ENCODE measurements at regions of chr11 and their contacts with region 1.

Region 1: GRCh38 chr11:45102810-45103621 is 43.4 kb upstream of the PRDM11 start:
- DNase-seq: no peak
- ATAC-seq: peak; percentile 73

Region 2: DNA sequence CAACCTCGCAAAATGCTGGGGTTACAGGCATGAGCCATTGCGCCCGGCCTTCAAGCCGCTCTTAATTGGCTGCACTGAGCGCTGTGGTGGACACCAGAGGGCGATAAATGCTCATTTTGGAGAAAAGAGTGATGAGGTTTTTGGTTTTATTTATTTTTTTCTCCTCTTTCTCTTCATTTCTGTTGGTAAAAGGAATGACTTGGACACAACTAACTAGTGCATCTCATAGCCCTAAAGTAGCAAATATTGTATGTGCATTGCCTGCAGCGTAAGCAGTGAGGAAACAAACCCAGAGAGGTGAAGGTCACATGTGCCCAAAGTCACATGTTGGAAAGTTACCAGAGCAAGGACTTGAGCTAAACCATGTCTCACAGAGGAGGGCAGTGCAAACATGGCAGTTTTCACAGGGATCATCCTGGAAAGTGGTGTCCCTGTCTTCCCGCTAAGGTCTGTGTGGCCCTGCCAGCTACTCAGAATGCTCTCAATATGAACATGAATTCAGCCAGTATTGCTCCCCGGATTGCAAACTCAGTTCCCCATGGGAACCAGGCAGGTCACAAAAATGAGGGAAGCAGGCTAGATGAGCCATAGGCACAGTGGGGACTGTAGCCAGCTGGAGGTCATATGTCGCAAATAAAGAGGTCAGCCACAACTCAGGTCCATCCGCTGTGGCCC is 546.1 kb before region 1 on chr11:
- intact Hi-C with region 1: loop called (anchors 5 kb)
- DNase-seq: peak; percentile 88
- ATAC-seq: peak; percentile 70

Region 3: DNA sequence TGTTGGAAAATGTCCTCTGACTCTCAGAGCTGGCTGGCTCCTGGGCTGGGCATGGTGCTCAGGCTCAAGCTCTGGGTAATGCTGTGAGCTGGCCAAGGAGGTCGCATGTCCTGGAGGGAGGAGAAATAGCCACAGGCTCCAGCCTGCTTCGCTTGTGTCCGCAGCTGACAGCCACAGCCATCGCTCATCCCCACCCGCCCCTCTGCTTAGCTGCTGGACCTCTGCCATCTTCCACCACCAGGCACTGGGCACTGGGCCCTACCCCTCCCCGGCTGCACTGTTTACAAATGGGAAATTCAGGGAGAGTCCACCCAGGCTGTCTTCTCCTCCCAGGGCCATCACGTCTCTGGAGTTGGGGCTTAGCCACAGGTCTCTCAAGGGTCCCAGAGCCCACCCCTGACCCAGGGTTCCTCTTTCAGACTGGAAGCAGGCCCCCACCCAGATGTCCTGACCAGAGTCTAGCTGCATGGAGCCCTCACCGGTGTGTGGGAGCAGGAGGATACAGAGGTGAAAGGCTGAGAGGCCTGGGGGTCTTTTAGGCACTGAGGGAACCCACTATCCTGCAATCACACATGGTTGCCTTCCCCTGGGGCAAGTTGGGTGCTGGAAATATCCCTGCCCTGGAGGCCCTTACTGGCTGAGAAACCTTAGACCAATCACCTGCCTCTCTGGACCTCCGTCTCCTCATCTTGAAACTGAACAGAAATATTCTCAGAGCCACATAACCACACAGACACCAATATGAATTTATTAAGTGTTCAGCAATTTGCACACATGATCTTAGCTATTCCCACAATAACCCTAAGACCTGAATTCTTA is 474.9 kb before region 1 on chr11:
- intact Hi-C with region 1: loop called (anchors 5 kb)
- DNase-seq: peak; percentile 82
- ATAC-seq: peak; percentile 86

Region 4: GRCh38 chr11:44936525-44936924 is 166.5 kb before region 1 on chr11:
- intact Hi-C with region 1: loop called (anchors 1 kb)
- DNase-seq: peak; percentile 90
- ATAC-seq: peak; percentile 49

Region 5: DNA sequence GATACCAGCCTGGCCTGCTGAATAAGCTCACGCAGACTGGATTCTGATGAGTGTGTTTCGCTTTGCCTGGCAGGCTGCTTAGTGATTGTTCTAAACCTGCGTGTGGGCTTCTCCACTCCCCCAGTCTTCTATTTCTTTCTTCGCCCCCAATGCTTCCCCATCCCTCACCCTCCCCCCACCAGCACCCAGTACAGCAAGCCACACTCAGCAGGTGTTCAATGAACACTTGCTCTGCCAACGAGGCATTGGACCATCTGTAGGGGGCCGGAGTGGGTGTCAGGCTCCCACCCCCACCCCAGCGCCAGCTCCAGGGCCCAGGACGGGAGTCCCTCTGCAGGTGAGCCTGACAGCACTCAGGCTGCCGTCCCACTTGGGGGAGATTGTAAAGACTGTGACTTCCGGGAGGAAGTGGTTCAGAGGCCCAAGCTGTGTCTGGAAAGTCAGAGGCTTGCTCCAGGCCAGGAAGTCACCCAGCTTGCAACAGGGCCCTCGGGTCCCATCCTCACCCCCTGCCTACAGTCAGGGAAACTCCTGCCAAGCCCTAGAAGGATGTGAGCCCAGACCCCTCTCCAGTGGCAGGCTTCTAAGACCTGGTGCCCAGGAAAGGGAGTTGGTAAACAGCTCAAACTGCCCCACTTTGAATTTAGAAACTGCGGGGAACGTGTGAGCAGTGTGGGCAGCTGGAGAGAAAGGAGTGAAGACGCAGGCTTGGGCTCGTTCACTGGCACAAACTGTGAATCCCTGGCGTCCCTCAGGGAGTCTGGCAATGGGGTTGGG is 22.9 kb before region 1 on chr11:
- intact Hi-C with region 1: no loop called
- DNase-seq: peak; percentile 72
- ATAC-seq: no peak

Measured in Right ventricle myocardium inferior (tissue), 1 donor.